Psoas muscle (tissue), 8 donors: ENCODE measurements at regions of chr15 and their contacts with region 1.

Region 1: GRCh38 chr15:25508369-25509002 is 69.7 kb upstream of the UBE3A start:
- DNase-seq: no peak
- ATAC-seq: peak in 2 of 4 donors; percentile 63 to 78
- H3K4me3 ChIP-seq: no peak overlapping the region
- H3K27ac ChIP-seq: no peak overlapping the region
- H3K4me1 ChIP-seq: no peaks in the 10 kb centered on the region
- H3K27me3 ChIP-seq: no peaks in the 10 kb centered on the region
- CTCF ChIP-seq: peak; percentile 82

Region 2: GRCh38 chr15:25693321-25694237 is 185.1 kb after region 1 on chr15:
- intact Hi-C with region 1: loop called (anchors 1 to 10 kb)
- DNase-seq: peak in 1 of 2 donors; percentile 73
- ATAC-seq: peak; percentile 62 to 79 (median 79)
- H3K4me3 ChIP-seq: no peak overlapping the region
- H3K27ac ChIP-seq: no peak overlapping the region
- H3K4me1 ChIP-seq: no peaks in the 10 kb centered on the region
- H3K27me3 ChIP-seq: no peaks in the 10 kb centered on the region
- CTCF ChIP-seq: peak; percentile 55

Region 3: DNA sequence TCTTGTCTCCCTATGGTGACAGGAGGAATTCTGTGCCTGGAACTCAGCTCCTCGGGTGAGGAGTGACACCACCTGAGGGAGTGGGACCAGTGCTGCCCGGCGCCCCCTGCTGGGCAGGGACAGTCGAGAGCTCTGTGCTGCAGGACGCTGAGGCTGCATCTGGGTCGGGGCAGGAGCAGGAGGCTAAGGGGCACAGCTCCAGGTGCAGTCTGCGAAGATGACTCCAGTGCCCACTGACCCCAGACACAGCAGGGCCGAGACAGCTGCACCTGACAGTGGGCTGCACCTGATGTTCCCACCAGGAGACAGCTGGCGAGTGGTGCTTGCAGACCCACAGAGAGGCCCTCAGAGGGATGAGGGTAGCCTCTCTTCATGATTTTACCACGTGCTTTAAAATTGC is 201.7 kb after region 1 on chr15:
- intact Hi-C with region 1: loop called in 1 of 2 experiments (anchors 2 kb)
- DNase-seq: peak; percentile 60 to 73
- ATAC-seq: peak; percentile 67 to 84 (median 82)
- H3K4me3 ChIP-seq: no peak overlapping the region
- H3K27ac ChIP-seq: no peak overlapping the region
- H3K4me1 ChIP-seq: no peaks in the 10 kb centered on the region
- H3K27me3 ChIP-seq: no peaks in the 10 kb centered on the region
- CTCF ChIP-seq: peak; percentile 65

Region 4: DNA sequence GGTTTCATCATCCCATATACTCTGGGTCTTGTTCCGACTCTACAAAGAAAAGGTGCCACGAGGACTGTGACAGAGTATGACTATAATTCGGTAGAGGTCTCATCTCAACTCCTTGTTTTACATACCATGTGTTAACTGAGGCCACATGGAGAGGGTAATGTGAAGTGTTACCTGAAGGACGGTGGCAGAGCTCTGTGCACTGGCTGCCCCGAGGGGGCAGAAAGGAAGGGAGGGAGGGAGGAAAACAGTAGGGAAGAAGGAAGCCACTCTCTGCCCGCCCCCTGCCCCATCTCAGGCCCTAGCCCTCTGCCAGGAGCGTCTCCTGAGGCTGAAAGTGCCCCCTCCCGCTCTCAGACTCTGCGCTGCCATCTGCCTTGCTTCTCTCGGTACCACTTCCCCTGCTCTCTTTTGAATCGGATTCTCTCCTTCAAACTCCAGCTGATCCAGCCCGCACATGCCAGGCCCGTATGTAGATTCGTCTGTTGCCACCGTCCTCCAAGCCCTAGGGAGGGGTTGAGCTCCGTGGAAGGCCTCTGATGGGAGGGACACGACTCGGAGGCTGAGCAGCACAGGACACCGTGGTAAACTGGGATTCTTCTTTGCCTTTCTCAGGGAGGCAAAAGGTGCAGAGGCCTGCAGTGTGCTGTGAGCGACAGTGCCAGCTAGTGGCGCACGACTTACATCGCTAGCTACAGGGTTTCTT is 425.1 kb after region 1 on chr15:
- intact Hi-C with region 1: loop called (anchors 2 to 5 kb)
- DNase-seq: peak; percentile 68 to 80
- ATAC-seq: peak; percentile 79 to 94 (median 86)
- H3K4me3 ChIP-seq: peak overlapping the region; percentile 21
- H3K27ac ChIP-seq: no peak overlapping the region
- H3K4me1 ChIP-seq: no peaks in the 10 kb centered on the region
- H3K27me3 ChIP-seq: no peaks in the 10 kb centered on the region
- CTCF ChIP-seq: peak; percentile 64

Region 5: GRCh38 chr15:26864664-26865191 is 1356.2 kb after region 1 on chr15:
- intact Hi-C with region 1: loop called (anchors 10 kb)
- DNase-seq: no peak
- ATAC-seq: peak in 1 of 4 donors; percentile 62
- H3K4me3 ChIP-seq: no peak overlapping the region
- H3K27ac ChIP-seq: no peak overlapping the region
- H3K4me1 ChIP-seq: no peaks in the 10 kb centered on the region
- H3K27me3 ChIP-seq: peaks cover 0 to 37% (median 9%) of the 10 kb centered on the region in 3 donors
- CTCF ChIP-seq: no peak